B cell (primary cell): ENCODE measurements at regions of chr19 and their contacts with region 1.

Region 1: DNA sequence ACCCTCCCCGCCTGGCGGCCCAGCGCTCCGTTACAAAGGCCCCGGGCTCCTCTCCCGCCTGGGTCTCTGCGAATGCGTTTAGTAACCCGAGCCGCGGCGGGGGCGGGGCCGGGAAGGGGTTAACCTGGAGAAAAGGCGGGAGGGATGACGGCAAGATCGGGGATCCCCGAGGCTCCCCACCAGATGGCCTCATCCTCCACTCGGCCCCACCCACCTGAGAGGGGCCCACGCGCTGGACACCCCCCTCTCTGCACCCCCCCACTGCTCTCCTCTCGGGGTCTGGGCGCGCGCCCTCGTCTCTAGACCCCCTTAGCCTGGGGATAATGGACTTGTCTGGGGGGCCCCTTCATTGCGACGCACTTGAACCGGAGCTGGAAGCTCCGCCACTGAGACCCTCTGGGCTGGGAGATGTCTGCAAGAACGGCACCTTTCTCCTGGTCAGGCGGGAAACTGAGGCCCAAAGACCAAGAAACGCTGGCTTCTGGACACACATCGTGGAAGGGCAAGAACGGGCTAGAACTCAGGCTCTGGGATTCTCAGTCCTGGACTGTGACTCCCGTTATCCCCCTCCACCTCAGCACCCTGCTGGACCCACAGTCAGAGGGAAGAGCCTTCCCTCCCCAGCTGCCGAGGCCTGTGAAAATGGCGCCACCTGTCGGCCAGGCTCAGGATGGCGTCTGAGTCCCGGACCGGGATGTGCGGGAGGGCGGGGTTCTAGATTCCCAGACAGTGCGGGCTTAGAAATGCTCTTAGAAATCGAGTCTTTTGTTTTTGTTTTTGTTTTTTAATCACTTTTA is 2.9 kb upstream of the LTBP4 start:
- DNase-seq: peak; percentile 87
- ATAC-seq: peak; percentile 60
- H3K4me3 ChIP-seq: no peak overlapping the region
- H3K4me3 Mint-ChIP-seq: peak overlapping the region; percentile 61
- H3K27ac ChIP-seq: no peak overlapping the region
- H3K27ac Mint-ChIP-seq: peak overlapping the region; percentile 32
- H3K4me1 ChIP-seq: peaks cover 59 to 65% of the 10 kb centered on the region in 2 donors
- H3K4me1 Mint-ChIP-seq: peaks cover 45% of the 10 kb centered on the region
- H3K27me3 ChIP-seq: peaks cover 0 to 69% (median 40%) of the 10 kb centered on the region in 4 experiments
- H3K27me3 Mint-ChIP-seq: peaks cover 35% of the 10 kb centered on the region
- CTCF ChIP-seq: peak; percentile 98

Region 2: GRCh38 chr19:38949580-38950367 is 1648.5 kb before region 1 on chr19:
- CTCF ChIA-PET with region 1: no interaction called
- POLR2A ChIA-PET with region 1: no interaction called
- intact Hi-C with region 1: no loop called
- DNase-seq: peak; percentile 78
- ATAC-seq: peak; percentile 92
- H3K4me3 ChIP-seq: peak overlapping the region in 4 of 5 experiments; percentile 13 to 54 (median 39)
- H3K4me3 Mint-ChIP-seq: peak overlapping the region; percentile 83
- H3K27ac ChIP-seq: no peak overlapping the region
- H3K27ac Mint-ChIP-seq: no peak overlapping the region
- H3K4me1 ChIP-seq: peaks cover 10 to 12% of the 10 kb centered on the region in 2 donors
- H3K4me1 Mint-ChIP-seq: peaks cover 12% of the 10 kb centered on the region
- H3K27me3 ChIP-seq: peaks cover 0 to 23% (median 2%) of the 10 kb centered on the region in 4 experiments
- H3K27me3 Mint-ChIP-seq: peaks cover 34% of the 10 kb centered on the region
- CTCF ChIP-seq: no peak

Region 3: DNA sequence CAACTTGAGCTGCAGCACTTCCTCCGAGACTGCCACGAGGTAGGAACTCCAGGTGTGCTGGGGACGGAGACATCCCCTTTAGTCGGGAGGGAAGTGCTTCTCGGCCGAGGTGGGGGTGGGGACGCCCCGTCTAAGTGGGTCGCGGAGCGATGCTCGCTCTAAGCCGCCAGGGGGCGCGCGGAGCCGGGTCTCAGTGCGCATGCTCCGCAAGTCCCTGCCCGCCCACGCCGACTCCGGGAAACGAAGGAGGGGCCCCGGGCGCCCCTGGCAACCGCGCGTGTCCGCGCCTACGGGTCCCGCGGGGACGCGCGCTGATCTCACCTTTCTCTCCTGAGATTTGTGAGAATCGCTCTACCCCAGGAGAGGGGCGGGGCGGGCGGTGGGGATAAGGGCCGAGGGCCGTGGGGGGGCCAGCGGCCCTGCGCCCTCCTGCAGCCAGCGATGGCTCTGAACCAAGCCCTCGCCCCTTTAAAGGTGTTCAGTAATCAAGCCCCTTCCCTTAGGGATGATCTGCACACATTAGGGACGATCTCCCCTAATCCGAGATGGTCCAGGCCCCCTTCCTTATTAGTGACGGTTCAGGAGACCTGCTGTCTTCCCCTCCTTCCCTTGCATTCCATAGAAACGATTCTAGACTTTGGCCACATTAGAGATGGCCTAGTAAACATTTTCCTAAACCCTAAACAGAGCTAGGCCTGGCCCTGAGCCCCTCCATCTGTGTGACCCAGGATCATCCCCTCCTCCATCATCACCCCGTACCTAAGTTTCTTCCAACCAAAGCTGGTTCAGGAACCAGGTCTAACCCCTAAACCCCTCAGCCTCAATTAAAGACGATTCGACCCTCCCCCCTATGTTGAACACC is 69.0 kb before region 1 on chr19:
- CTCF ChIA-PET with region 1: interaction called, 3 read pairs
- POLR2A ChIA-PET with region 1: no interaction called
- intact Hi-C with region 1: loop called (anchors 1 kb)
- DNase-seq: peak; percentile 95
- ATAC-seq: peak; percentile 91
- H3K4me3 ChIP-seq: peak overlapping the region; percentile 9 to 69 (median 41)
- H3K4me3 Mint-ChIP-seq: peak overlapping the region; percentile 82
- H3K27ac ChIP-seq: no peak overlapping the region
- H3K27ac Mint-ChIP-seq: peak overlapping the region; percentile 64
- H3K4me1 ChIP-seq: peaks cover 13 to 14% of the 10 kb centered on the region in 2 donors
- H3K4me1 Mint-ChIP-seq: peaks cover 13% of the 10 kb centered on the region
- H3K27me3 ChIP-seq: peaks cover 0 to 35% (median 18%) of the 10 kb centered on the region in 4 experiments
- H3K27me3 Mint-ChIP-seq: peaks cover 44% of the 10 kb centered on the region
- CTCF ChIP-seq: peak; percentile 91

Region 4: GRCh38 chr19:40549007-40549708 is 49.2 kb before region 1 on chr19:
- CTCF ChIA-PET with region 1: interaction called, 22 read pairs
- POLR2A ChIA-PET with region 1: no interaction called
- intact Hi-C with region 1: loop called (anchors 1 kb)
- DNase-seq: peak; percentile 70
- ATAC-seq: peak; percentile 82
- H3K4me3 ChIP-seq: no peak overlapping the region
- H3K4me3 Mint-ChIP-seq: no peak overlapping the region
- H3K27ac ChIP-seq: no peak overlapping the region
- H3K27ac Mint-ChIP-seq: peak overlapping the region; percentile 22
- H3K4me1 ChIP-seq: peaks cover 4% of the 10 kb centered on the region in 2 donors
- H3K4me1 Mint-ChIP-seq: peaks cover 10% of the 10 kb centered on the region
- H3K27me3 ChIP-seq: peaks cover 0 to 49% (median 28%) of the 10 kb centered on the region in 4 experiments
- H3K27me3 Mint-ChIP-seq: peaks cover 48% of the 10 kb centered on the region
- CTCF ChIP-seq: peak; percentile 55

Region 5: DNA sequence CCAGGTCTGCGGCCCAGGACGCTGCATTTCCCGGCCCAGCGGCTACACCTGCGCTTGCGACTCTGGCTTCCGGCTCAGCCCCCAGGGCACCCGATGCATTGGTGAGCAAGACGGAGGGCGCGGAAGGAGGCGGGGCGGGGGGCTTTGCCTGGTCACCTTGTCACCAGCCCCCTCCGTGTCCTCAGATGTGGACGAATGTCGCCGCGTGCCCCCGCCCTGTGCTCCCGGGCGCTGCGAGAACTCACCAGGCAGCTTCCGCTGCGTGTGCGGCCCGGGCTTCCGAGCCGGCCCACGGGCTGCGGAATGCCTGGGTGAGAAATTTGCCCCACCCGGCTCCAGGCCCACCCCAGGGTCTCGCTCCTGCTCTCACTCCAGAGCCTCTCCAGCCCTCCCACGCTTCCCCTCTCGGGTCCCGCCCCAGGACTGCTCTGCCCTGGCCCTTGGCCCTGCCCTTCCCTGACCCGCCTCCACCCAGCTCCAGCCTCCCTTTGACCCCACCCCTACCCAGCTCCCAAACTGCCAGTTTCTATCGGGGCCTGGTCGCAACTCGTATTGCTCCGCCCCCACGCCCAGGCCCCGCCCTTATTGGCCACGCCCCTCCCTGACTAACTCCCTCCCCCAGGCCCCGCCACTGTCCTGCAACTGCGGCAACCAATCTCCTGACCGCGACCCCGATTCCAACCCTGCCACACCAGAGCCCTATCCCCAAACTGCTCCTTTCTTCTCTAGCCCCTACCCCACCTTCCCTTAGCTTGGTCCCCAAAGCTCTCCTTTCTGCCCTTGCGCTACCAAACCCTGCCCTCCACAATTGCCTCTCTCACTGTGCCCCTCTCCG is 11.5 kb after region 1 on chr19:
- CTCF ChIA-PET with region 1: interaction called, 16 read pairs
- POLR2A ChIA-PET with region 1: interaction called, 9 read pairs
- intact Hi-C with region 1: no loop called
- DNase-seq: peak; percentile 90
- ATAC-seq: peak; percentile 57
- H3K4me3 ChIP-seq: peak overlapping the region in 4 of 5 experiments; percentile 49 to 72 (median 62)
- H3K4me3 Mint-ChIP-seq: peak overlapping the region; percentile 92
- H3K27ac ChIP-seq: peak overlapping the region; percentile 83 to 93
- H3K27ac Mint-ChIP-seq: peak overlapping the region; percentile 98
- H3K4me1 ChIP-seq: peaks cover 38 to 58% of the 10 kb centered on the region in 2 donors
- H3K4me1 Mint-ChIP-seq: peaks cover 56% of the 10 kb centered on the region
- H3K27me3 ChIP-seq: no peaks in the 10 kb centered on the region
- H3K27me3 Mint-ChIP-seq: no peaks in the 10 kb centered on the region
- CTCF ChIP-seq: no peak